Posterior vena cava (tissue), 2 donors: ENCODE measurements at regions of chr2 and their contacts with region 1.

Region 1: DNA sequence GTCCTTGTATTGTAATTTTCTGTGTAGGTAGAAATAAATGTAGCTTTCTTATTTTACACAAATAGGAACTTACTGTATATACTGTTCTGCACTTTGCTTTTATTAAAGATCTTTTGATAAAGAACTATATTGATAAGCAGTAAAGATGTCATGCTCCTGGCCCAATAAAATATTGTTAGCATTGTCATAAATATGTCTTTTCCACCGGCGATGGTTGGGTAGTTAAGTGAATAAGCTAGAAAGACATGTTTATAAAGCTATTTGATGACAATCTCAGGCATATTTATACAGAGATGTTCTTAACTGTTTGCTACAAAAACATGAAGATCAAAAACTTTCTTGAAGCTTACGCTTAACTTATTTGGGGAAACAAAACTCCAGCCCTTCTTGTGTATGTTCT is 69.3 kb downstream of the ACTR3 start:
- DNase-seq: no peak

Region 2: DNA sequence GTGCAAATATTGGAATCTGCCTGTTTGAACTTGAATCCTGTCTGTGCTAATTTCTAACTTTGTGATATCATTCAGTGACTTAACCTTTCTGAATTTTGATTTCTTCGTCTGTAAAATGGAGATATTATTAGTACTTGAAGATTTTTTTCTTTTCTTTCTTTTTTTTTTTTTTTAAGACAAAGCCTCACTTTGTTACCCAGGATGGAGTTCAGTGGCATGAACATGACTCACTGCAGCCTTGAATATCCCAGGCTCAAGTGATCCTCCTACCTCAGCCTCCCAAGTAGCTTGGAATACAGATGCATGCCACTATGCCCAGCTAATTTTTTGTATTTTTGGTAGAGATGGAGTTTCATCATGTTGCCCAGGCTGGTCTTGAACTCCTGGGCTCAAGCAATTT is 41.0 kb before region 1 on chr2:
- intact Hi-C with region 1: loop called in 1 of 2 experiments (anchors 2 kb)
- DNase-seq: no peak